Heart right ventricle (tissue), 16 donors: ENCODE measurements at regions of chr6 and their contacts with region 1.

Region 1: DNA sequence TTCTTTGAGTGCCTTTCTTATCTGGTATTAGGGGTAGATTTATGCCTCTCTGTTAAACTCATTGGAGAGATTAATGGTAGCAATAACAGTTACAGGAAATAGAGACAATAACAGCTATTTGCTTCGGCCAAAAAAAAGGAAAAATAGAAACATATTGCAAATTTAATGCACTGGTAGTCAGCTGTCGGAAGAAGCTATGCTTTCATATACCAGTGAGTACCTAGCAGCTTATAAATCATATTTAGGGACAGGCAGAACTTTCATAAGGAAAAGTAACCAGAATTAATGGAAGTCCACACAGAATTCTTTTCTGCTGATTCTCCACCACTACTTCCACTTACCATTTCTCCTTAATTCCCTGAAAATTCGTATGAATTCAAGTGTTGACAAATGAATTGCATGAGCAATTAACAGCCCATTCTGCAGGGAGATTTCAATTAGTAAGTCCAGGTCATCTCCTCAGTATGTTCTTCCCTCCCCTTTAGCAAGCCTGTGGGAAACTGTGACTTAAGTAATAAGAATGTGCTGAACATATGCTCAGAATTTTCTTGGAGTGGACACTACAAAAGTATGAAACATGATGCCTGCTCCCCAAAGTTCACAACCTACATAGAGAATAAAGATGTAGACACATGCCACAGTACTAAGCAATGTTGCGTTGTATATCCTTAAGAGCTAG is 196.7 kb upstream of the KCNQ5 start:
- DNase-seq: no peak
- ATAC-seq: no peak
- H3K4me3 ChIP-seq: no peak overlapping the region
- H3K27ac ChIP-seq: no peak overlapping the region
- H3K4me1 ChIP-seq: no peaks in the 10 kb centered on the region
- H3K27me3 ChIP-seq: peaks cover 0 to 3% (median 0%) of the 10 kb centered on the region in 7 donors
- CTCF ChIP-seq: no peak

Region 2: DNA sequence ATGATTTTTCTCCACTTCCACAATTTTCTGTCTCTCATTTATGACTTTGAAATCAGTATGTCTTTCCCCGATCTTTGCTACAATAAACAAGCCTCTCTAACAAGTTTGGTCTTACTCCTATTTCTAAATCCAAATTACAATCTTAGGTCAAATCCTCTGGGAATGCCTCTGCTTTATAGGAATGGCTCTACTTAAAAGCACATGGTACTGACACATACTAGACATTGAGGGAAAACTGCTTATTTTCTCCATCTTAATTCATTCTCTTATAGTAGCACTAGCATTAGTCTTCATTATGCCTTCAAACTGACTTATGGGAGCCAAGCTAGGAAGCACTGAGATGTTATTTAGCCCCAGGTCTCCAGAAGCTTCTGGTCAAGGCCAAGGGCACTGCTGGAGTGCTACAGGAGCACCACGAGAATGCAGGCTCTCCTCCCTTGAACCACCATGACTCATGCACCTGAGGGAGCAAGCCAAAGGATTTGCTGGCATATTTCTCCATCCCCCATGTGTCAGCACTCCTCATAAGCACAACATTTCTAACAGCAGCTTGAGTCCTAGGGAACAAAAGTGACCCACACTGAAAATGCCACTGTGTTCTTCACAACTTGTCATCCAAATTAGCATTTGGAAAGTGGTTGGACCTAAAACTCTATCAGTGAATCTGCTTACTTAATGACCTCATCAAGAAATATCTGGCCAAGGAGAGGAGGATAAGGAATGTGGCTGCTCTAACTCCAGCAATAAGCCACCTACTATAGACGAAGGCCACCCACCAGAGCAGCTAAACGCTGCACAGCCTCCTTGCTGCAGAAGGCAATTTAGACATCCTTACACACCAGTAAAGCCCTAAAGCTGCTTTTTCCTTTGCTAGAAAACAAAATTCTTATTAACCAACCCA is 39.9 kb after region 1 on chr6:
- intact Hi-C with region 1: no loop called
- DNase-seq: no peak
- ATAC-seq: no peak
- H3K4me3 ChIP-seq: no peak overlapping the region
- H3K27ac ChIP-seq: no peak overlapping the region
- H3K4me1 ChIP-seq: no peaks in the 10 kb centered on the region
- H3K27me3 ChIP-seq: no peaks in the 10 kb centered on the region
- CTCF ChIP-seq: no peak

Region 3: DNA sequence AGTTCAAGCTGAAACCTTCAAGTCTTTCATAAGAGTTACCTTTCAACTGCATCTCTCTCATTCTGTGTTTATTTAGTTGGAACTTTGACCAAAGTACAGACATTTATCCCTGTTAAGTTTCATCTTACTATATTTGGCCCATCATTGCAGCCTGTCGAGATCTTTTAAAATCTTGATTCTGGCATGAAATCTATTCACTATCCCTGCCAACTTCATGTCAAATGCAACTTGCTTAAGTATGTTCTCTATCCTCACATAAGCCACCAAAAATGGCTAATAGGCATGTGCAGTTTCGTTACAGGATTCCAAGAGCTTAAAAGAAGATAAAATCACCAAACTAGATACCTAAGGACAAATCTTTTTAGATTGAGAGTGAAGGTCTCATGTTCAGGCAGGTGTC is 79.3 kb after region 1 on chr6:
- intact Hi-C with region 1: no loop called
- DNase-seq: no peak
- ATAC-seq: no peak
- H3K4me3 ChIP-seq: no peak overlapping the region
- H3K27ac ChIP-seq: no peak overlapping the region
- H3K4me1 ChIP-seq: no peaks in the 10 kb centered on the region
- H3K27me3 ChIP-seq: no peaks in the 10 kb centered on the region
- CTCF ChIP-seq: no peak

Region 4: DNA sequence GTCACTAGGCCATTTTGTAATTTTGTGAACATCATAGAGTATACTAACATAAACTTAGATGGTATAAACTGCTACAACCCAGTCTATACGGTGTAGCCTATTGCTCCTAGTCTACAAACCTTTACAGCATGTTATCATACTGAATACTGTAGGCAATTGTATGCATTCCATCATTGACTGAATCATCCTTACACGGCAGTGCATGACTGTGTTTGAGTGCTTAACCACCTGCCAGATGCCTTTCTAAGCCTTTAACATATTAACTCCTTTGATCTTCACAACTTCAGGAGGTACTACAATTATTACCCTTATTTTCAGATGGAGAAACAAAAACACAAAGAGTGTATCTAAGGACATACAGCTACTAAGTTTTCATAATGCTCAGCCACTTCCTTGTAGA is 914.9 kb after region 1 on chr6:
- intact Hi-C with region 1: loop called in 1 of 10 experiments (anchors 10 kb)
- DNase-seq: no peak
- ATAC-seq: no peak
- H3K4me3 ChIP-seq: no peak overlapping the region
- H3K27ac ChIP-seq: no peak overlapping the region
- H3K4me1 ChIP-seq: no peaks in the 10 kb centered on the region
- H3K27me3 ChIP-seq: peaks cover 0 to 7% (median 0%) of the 10 kb centered on the region in 7 donors
- CTCF ChIP-seq: no peak